CD14-positive monocyte (primary cell): ENCODE measurements at regions of chr5 and their contacts with region 1.

Region 1: DNA sequence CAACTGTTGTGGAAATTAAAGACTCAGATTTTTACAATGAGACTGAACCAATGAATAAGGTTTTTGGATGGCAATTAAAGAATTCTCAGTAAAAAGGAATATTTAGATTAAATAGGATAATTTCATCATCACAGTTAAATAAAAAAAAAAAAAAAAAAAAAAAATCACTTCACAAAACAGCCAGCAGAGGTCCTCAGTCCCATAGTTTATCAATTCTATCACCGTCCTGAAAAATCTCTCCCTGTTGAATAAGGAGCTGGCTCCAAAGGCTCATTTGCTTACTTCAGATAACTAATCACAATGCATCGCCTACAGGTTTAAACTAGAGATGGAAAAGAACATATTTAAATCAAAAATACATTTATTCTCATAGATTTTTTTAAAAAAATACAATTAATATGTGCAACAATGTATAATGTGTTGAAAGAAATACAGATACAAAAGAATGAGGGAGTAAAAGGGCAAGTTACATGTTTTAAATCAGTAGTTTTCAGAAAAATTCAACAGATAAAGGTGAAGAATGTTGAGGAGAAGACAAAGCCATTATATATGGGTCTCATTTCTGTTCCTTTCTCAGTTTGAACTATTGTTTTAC is 175.8 kb upstream of the CHD1 start:
- DNase-seq: peak; percentile 1 to 46 (median 25)
- H3K4me3 ChIP-seq: no peak overlapping the region
- H3K4me3 Mint-ChIP-seq: no peak overlapping the region
- H3K27ac ChIP-seq: no peak overlapping the region
- H3K27ac Mint-ChIP-seq: no peak overlapping the region
- H3K4me1 ChIP-seq: no peaks in the 10 kb centered on the region
- H3K4me1 Mint-ChIP-seq: peaks cover 3% of the 10 kb centered on the region
- H3K27me3 ChIP-seq: peaks cover 0 to 6% of the 10 kb centered on the region in 2 donors
- H3K27me3 Mint-ChIP-seq: peaks cover 2 to 6% (median 2%) of the 10 kb centered on the region in 3 donors
- CTCF ChIP-seq: peak; percentile 83

Region 2: GRCh38 chr5:98963019-98963418 is 141.6 kb before region 1 on chr5:
- intact Hi-C with region 1: no loop called
- DNase-seq: no peak
- H3K4me3 ChIP-seq: no peak overlapping the region
- H3K4me3 Mint-ChIP-seq: no peak overlapping the region
- H3K27ac ChIP-seq: no peak overlapping the region
- H3K27ac Mint-ChIP-seq: no peak overlapping the region
- H3K4me1 ChIP-seq: peaks cover 0 to 3% of the 10 kb centered on the region in 2 donors
- H3K4me1 Mint-ChIP-seq: peaks cover 19% of the 10 kb centered on the region
- H3K27me3 ChIP-seq: no peaks in the 10 kb centered on the region
- H3K27me3 Mint-ChIP-seq: no peaks in the 10 kb centered on the region
- CTCF ChIP-seq: no peak

Region 3: DNA sequence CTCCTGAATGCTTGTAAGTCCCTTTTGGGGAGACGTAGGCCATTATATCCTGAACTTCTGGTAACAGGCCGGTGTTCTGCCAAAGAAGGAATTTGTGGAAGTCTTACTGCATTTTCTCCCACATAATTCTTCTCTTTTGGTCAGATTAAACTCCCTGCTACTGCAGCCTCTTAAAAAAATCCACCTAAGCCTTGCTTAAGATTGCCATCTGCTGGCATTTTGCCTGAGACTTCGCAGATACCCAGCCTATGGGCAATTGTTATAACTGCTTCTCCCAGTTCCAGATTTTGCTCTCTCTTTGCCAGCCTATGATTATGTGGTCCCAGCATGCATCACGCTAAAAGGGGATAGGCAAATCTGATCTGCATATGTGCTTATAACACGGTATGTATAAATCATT is 215.8 kb after region 1 on chr5:
- intact Hi-C with region 1: loop called in 1 of 2 experiments (anchors 10 kb)
- DNase-seq: peak; percentile 24 to 51 (median 47)
- H3K4me3 ChIP-seq: no peak overlapping the region
- H3K4me3 Mint-ChIP-seq: no peak overlapping the region
- H3K27ac ChIP-seq: no peak overlapping the region
- H3K27ac Mint-ChIP-seq: no peak overlapping the region
- H3K4me1 ChIP-seq: peaks cover 21% of the 10 kb centered on the region in 2 donors
- H3K4me1 Mint-ChIP-seq: peaks cover 17% of the 10 kb centered on the region
- H3K27me3 ChIP-seq: no peaks in the 10 kb centered on the region
- H3K27me3 Mint-ChIP-seq: peaks cover 7 to 15% (median 9%) of the 10 kb centered on the region in 3 donors
- CTCF ChIP-seq: peak; percentile 17